Breast epithelium (tissue), 4 donors: ENCODE measurements at regions of chr4 and their contacts with region 1.

Region 1: DNA sequence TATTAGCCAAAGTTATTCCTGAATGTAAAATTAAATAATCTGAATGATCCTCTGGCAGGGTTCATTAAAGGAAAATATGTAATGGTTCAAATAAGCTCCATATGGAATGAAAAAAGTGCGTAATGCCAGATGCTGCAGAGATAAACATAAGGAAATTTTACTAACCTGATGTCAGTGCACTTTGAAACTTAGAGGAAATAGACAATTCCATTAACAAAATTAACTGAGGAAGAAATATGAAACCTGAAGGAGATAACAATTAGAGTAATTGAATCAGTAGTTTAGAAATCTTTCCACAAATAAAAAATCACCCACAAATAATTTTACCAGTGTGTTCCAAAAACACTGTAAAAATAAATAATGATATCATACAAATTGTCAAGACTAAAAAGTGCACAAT is 387.5 kb downstream of the GRIA2 start:
- DNase-seq: no peak
- H3K4me3 ChIP-seq: no peak overlapping the region
- H3K27ac ChIP-seq: no peak overlapping the region
- H3K4me1 ChIP-seq: no peaks in the 10 kb centered on the region
- H3K27me3 ChIP-seq: no peaks in the 10 kb centered on the region
- CTCF ChIP-seq: no peak
- POLR2A ChIP-seq: no peak

Region 2: DNA sequence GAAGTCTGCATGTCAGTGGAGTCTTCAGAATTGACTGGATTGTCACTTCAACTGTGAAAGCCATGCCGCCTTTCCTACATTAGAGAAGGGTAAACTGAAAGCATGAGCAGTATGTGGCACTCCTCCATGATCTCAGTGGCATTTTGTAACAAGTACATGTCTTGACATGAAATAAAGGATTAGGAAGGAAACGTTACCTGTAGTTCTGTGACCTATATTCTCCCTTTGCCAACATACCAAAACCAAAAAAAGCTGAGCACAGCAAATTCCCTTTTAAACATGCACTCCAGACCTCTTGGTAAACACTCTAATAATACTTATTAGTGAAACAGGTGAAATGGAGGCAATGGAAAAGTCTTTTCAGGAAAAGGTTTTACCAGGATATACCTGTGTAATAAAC is 43.2 kb before region 1 on chr4:
- intact Hi-C with region 1: no loop called
- DNase-seq: no peak
- H3K4me3 ChIP-seq: no peak overlapping the region
- H3K27ac ChIP-seq: no peak overlapping the region
- H3K4me1 ChIP-seq: no peaks in the 10 kb centered on the region
- H3K27me3 ChIP-seq: no peaks in the 10 kb centered on the region
- CTCF ChIP-seq: no peak
- POLR2A ChIP-seq: no peak

Region 3: DNA sequence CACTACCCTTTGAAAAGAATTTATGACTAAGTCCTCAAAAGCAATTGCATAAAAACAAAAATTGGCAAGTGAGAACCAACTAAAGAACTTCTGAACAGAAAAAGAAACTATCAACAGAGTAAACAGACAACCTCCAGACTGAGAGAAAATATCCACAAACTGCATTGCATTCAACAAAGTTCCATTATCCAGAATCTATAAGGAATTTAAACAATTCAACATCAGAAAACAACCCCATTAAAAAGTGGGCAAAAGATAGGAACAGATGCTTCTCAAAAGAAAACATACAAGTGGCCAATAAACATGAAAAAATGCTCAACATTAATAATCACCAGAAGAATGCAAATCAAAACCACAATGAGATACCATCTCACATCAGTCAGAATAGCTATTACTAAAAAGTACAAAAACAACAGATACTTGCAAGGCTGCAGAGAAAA is 434.6 kb after region 1 on chr4:
- intact Hi-C with region 1: loop called (anchors 5 kb)
- DNase-seq: no peak
- H3K4me3 ChIP-seq: no peak overlapping the region
- H3K27ac ChIP-seq: no peak overlapping the region
- H3K4me1 ChIP-seq: no peaks in the 10 kb centered on the region
- H3K27me3 ChIP-seq: no peaks in the 10 kb centered on the region
- CTCF ChIP-seq: no peak
- POLR2A ChIP-seq: no peak